B cell (primary cell): ENCODE measurements at regions of chr16 and their contacts with region 1.

Region 1: GRCh38 chr16:74666425-74667254 is at the start of gene RFWD3:
- DNase-seq: peak; percentile 98
- ATAC-seq: peak; percentile 100
- H3K4me3 ChIP-seq: peak within 1 kb of the TSS; percentile 80 to 99 (median 81)
- H3K4me3 Mint-ChIP-seq: peak within 1 kb of the TSS; percentile 93
- H3K27ac ChIP-seq: peak within 1 kb of the TSS; percentile 64 to 89
- H3K27ac Mint-ChIP-seq: peak within 1 kb of the TSS; percentile 92
- H3K4me1 ChIP-seq: peaks cover 10 to 14% of the 10 kb centered on the region in 2 donors
- H3K4me1 Mint-ChIP-seq: peaks cover 38% of the 10 kb centered on the region
- H3K27me3 ChIP-seq: no peaks in the 10 kb centered on the region
- H3K27me3 Mint-ChIP-seq: no peaks in the 10 kb centered on the region
- CTCF ChIP-seq: no peak
- total RNA-seq, gene RFWD3: 63.3 and 65.0 TPM in 2 replicates

Region 2: GRCh38 chr16:74684131-74684530 is 17.5 kb after region 1 on chr16:
- CTCF ChIA-PET with region 1: interaction called, 4 read pairs
- POLR2A ChIA-PET with region 1: no interaction called
- intact Hi-C with region 1: loop called (anchors 2 kb)
- DNase-seq: no peak
- ATAC-seq: no peak
- H3K4me3 ChIP-seq: no peak overlapping the region
- H3K4me3 Mint-ChIP-seq: no peak overlapping the region
- H3K27ac ChIP-seq: no peak overlapping the region
- H3K27ac Mint-ChIP-seq: no peak overlapping the region
- H3K4me1 ChIP-seq: peaks cover 3 to 12% of the 10 kb centered on the region in 2 donors
- H3K4me1 Mint-ChIP-seq: peaks cover 7% of the 10 kb centered on the region
- H3K27me3 ChIP-seq: no peaks in the 10 kb centered on the region
- H3K27me3 Mint-ChIP-seq: no peaks in the 10 kb centered on the region
- CTCF ChIP-seq: no peak

Region 3: DNA sequence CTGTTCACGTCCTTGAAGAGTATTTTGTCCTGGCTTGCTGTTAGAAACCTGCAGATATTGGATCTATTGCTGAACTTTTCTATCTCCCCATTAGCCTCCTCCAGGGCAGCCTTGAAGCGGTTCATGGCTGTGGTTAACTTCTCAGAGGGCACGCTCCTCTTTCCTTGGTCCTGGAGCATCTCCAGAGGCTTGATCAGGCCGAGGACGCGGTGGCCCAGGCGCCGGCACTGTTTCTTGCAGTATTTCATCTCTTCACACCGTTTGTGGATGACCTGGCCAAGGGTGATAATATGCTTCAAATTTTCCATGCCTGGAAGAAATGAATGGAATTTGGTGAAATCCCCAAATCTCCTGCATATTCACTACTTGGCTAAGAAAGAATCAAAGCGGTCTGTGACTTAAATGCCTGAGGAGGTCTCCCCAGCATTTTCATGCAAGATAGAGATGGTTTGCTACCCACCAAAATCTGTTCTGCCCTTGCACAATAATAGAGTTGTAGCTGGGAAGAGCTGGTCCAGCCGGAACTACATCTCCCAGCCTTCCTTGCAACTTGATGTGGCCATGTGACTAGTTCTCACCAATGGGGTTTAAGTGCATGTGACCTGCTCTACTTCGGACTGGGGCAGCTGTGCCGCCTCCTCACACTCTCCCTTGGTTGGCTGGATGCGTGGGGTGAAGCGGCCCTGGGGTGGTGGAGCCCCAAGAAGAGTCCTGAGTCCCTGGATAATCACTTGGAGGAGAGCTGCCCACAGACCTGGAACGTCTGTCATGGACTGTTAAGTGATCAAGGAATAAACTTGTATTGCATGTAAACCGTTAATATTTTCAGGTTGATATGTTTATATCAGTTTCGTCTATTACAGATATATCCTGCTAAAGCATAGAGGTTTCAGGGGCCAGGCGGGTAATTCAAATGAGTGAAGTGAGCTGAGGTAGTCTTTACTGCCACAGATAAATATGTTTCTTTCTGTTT is 29.1 kb after region 1 on chr16:
- CTCF ChIA-PET with region 1: interaction called, 6 read pairs
- POLR2A ChIA-PET with region 1: interaction called, 5 read pairs
- intact Hi-C with region 1: loop called (anchors 1 kb)
- DNase-seq: peak; percentile 81
- ATAC-seq: peak; percentile 85
- H3K4me3 ChIP-seq: peak overlapping the region in 4 of 5 experiments; percentile 26 to 60 (median 42)
- H3K4me3 Mint-ChIP-seq: peak overlapping the region; percentile 89
- H3K27ac ChIP-seq: peak overlapping the region; percentile 34 to 44
- H3K27ac Mint-ChIP-seq: peak overlapping the region; percentile 72
- H3K4me1 ChIP-seq: peaks cover 23 to 29% of the 10 kb centered on the region in 2 donors
- H3K4me1 Mint-ChIP-seq: peaks cover 37% of the 10 kb centered on the region
- H3K27me3 ChIP-seq: no peaks in the 10 kb centered on the region
- H3K27me3 Mint-ChIP-seq: no peaks in the 10 kb centered on the region
- CTCF ChIP-seq: no peak

Region 4: DNA sequence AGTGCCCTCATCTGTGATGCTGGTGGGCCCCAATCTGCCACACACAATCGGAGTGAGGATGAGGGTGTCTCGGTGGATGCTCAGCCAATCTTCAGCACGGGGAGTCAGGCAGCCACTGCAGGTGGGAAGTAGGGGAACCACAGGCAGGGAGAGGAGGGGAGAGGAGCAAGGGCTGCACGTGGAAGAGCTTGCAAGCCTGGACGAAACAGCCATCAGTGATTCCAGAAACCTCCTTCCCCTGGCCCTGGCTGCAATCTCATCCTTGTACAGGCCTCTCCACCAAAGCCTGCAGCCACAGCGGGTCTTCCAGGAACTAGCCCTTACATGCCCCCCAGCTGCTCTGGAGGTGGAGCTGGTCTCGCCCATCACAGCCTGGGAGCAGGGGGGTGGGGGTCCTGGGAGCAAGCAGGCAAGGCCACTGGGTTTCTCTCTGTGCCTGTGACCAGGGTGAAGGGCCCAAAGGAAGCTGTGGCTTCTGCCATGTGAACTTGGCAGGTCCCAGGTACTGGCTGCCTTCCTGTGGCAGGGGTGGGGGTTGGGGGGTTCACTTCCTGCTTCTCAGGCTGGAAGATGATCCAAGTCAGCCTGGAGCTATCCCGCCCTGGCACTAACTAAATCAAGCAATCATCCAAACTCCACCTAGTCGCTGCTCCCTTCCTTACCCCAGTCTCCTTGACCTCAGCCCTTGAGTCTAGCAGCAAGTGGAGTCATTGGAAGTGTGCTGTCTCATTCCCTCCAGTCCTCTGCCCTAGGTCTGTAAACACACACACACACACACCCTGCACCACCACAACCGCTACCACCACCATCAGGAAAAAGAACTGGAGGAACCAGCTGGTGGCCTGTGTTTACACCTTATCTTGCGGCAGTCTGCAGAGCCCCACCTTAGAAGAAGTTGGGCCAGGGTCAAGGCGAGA is 63.4 kb after region 1 on chr16:
- CTCF ChIA-PET with region 1: no interaction called
- POLR2A ChIA-PET with region 1: no interaction called
- intact Hi-C with region 1: no loop called
- DNase-seq: no peak
- ATAC-seq: no peak
- H3K4me3 ChIP-seq: no peak overlapping the region
- H3K4me3 Mint-ChIP-seq: no peak overlapping the region
- H3K27ac ChIP-seq: no peak overlapping the region
- H3K27ac Mint-ChIP-seq: no peak overlapping the region
- H3K4me1 ChIP-seq: no peaks in the 10 kb centered on the region
- H3K4me1 Mint-ChIP-seq: no peaks in the 10 kb centered on the region
- H3K27me3 ChIP-seq: no peaks in the 10 kb centered on the region
- H3K27me3 Mint-ChIP-seq: no peaks in the 10 kb centered on the region
- CTCF ChIP-seq: no peak